ENCODE measurements at regions of chr12 and their contacts with region 1.

Region 1: GRCh38 chr12:19129486-19130223 is at the start of gene PLEKHA5:
- DNase-seq: peak; percentile 44
- ATAC-seq: peak; percentile 87
- H3K4me3 ChIP-seq: peak within 1 kb of the TSS; percentile 82 to 85 (median 83)
- H3K27ac ChIP-seq: peak within 1 kb of the TSS; percentile 66
- H3K4me1 ChIP-seq: peaks cover 27% of the 10 kb centered on the region
- H3K27me3 ChIP-seq: no peaks in the 10 kb centered on the region
- CTCF ChIP-seq: peak; percentile 70
- EP300 ChIP-seq: no peak
- POLR2A ChIP-seq: peak in 1 of 2 experiments; percentile 62; a peak in 1 of 4 replicates
- RAD21 ChIP-seq: peak; percentile 44; the same call in 1 of the 2 replicates
- total RNA-seq, gene PLEKHA5: 15.4 and 18.3 TPM in 2 replicates

Region 2: GRCh38 chr12:18919871-18920511 is 209.7 kb before region 1 on chr12:
- CTCF ChIA-PET with region 1: no interaction called
- POLR2A ChIA-PET with region 1: no interaction called
- in situ Hi-C with region 1: no loop called
- intact Hi-C with region 1: loop called (anchors 10 kb)
- DNase-seq: no peak
- ATAC-seq: peak; percentile 49; the same call in 1 of the 3 replicates
- H3K4me3 ChIP-seq: no peak overlapping the region
- H3K27ac ChIP-seq: no peak overlapping the region
- H3K4me1 ChIP-seq: no peaks in the 10 kb centered on the region
- H3K27me3 ChIP-seq: no peaks in the 10 kb centered on the region; a peak in 1 of 5 replicates
- CTCF ChIP-seq: no peak
- EP300 ChIP-seq: no peak
- POLR2A ChIP-seq: no peak
- RAD21 ChIP-seq: no peak

Region 3: GRCh38 chr12:19066475-19067001 is 63.1 kb before region 1 on chr12:
- CTCF ChIA-PET with region 1: no interaction called
- POLR2A ChIA-PET with region 1: no interaction called
- in situ Hi-C with region 1: no loop called
- intact Hi-C with region 1: loop called (anchors 1 kb)
- DNase-seq: peak; percentile 89
- ATAC-seq: peak; percentile 99
- H3K4me3 ChIP-seq: peak overlapping the region in 2 of 3 experiments; percentile 29; a peak in 3 of 6 replicates
- H3K27ac ChIP-seq: peak overlapping the region; percentile 72
- H3K4me1 ChIP-seq: peaks cover 36% of the 10 kb centered on the region
- H3K27me3 ChIP-seq: no peaks in the 10 kb centered on the region
- CTCF ChIP-seq: no peak
- EP300 ChIP-seq: peak; percentile 57 to 97; a peak in 3 of 4 replicates
- POLR2A ChIP-seq: 0 out of 4 replicates have a peak, but pooled peaks of 1 of the 2 experiments have one; percentile 27
- RAD21 ChIP-seq: 0 out of 2 replicates have a peak, but pooled peaks have one; percentile 38

Region 4: DNA sequence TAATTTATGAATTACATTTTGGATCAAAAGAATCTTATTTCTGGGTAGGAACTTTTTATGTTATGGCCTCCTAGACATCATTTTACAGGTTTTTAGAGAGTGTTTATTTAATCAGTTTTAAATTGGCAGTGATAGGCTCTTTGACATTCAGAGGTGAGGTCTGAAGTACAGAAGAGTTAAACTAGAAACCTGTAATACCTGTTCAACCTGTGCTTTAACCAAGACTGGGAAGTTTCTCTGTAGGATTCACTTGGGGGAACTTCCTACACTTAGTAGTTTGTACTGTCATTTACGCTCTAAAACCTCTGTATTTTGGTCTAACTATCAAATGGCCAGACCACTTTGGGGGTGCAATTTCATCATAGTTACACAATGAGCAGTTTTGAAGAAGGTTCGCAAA is 35.8 kb after region 1 on chr12:
- CTCF ChIA-PET with region 1: no interaction called
- POLR2A ChIA-PET with region 1: no interaction called
- in situ Hi-C with region 1: no loop called
- intact Hi-C with region 1: loop called (anchors 5 kb)
- DNase-seq: no peak
- ATAC-seq: no peak
- H3K4me3 ChIP-seq: no peak overlapping the region
- H3K27ac ChIP-seq: no peak overlapping the region
- H3K4me1 ChIP-seq: no peaks in the 10 kb centered on the region
- H3K27me3 ChIP-seq: no peaks in the 10 kb centered on the region
- CTCF ChIP-seq: no peak
- EP300 ChIP-seq: no peak
- POLR2A ChIP-seq: no peak
- RAD21 ChIP-seq: no peak

Measured in HepG2 (cell line).